AG04449 (cell line): ENCODE measurements at regions of chr17 and their contacts with region 1.

Region 1: GRCh38 chr17:29293890-29294579 is at the start of gene NUFIP2:
- DNase-seq: peak; percentile 83
- H3K4me3 ChIP-seq: peak within 1 kb of the TSS; percentile 99
- CTCF ChIP-seq: no peak

Region 2: GRCh38 chr17:29283271-29283895 is 10.7 kb before region 1 on chr17:
- CTCF ChIA-PET with region 1: interaction called, 56 read pairs
- POLR2A ChIA-PET with region 1: interaction called, 11 read pairs
- DNase-seq: no peak
- H3K4me3 ChIP-seq: no peak overlapping the region
- CTCF ChIP-seq: no peak

Region 3: DNA sequence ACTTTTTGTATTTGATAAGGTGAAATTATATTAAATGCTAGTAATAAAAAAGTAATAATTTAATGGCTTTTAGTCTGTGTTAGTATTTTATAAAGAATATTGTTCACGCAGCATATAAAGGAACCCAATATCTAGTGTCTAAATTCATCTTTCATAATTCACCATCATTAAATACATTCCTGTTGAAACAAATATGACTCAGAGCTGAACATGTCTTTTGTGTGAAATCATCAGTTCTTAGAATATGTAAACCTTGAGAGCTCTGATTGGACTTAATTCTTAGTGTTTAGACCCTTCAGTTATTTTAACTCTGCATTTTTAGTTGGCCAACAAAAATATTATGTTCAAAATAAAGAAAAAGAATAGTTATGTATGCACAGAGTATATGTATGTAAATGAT is 201.0 kb after region 1 on chr17:
- CTCF ChIA-PET with region 1: no interaction called
- POLR2A ChIA-PET with region 1: no interaction called
- DNase-seq: peak; percentile 17
- H3K4me3 ChIP-seq: no peak overlapping the region
- CTCF ChIP-seq: no peak